ENCODE measurements at regions of chr2 and their contacts with region 1.

Region 1: DNA sequence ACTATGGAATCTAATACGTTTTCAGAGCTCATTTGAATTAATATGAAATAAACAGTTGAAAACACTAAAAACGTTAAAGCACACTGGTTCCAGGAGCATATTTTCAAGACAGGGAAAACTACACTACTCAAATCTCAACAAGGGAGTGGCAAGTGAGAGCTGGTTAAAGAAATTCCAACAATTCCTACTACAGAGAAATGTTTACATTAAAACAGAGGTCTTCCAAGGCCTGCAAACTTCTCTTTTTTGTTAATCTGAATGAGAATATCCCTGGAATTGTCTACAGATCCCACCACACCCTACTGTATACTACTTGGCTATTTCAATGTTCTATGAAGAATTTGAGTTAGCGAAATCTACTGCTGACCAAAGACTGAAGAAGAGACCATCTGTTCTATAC is 231.5 kb downstream of the ZEB2 start:
- DNase-seq: no peak
- H3K4me3 ChIP-seq: no peak overlapping the region
- H3K27ac ChIP-seq: no peak overlapping the region
- H3K4me1 ChIP-seq: no peaks in the 10 kb centered on the region
- H3K27me3 ChIP-seq: no peaks in the 10 kb centered on the region
- CTCF ChIP-seq: no peak
- EP300 ChIP-seq: no peak
- POLR2A ChIP-seq: no peak

Region 2: GRCh38 chr2:143468341-143468888 is 820.0 kb before region 1 on chr2:
- in situ Hi-C with region 1: no loop called
- intact Hi-C with region 1: no loop called
- DNase-seq: no peak
- H3K4me3 ChIP-seq: no peak overlapping the region
- H3K27ac ChIP-seq: no peak overlapping the region
- H3K4me1 ChIP-seq: no peaks in the 10 kb centered on the region
- H3K27me3 ChIP-seq: no peaks in the 10 kb centered on the region
- CTCF ChIP-seq: no peak
- EP300 ChIP-seq: no peak
- POLR2A ChIP-seq: no peak

Region 3: GRCh38 chr2:144256996-144257707 is 31.3 kb before region 1 on chr2:
- in situ Hi-C with region 1: no loop called
- intact Hi-C with region 1: loop called (anchors 1 kb)
- DNase-seq: no peak
- H3K4me3 ChIP-seq: no peak overlapping the region
- H3K27ac ChIP-seq: no peak overlapping the region
- H3K4me1 ChIP-seq: peaks cover 0 to 3% (median 0%) of the 10 kb centered on the region in 4 donors
- H3K27me3 ChIP-seq: no peaks in the 10 kb centered on the region
- CTCF ChIP-seq: no peak
- EP300 ChIP-seq: no peak
- POLR2A ChIP-seq: no peak

Measured in transverse colon (tissue), 4 donors.